Right ventricle myocardium inferior (tissue), 1 donor: ENCODE measurements at regions of chr4 and their contacts with region 1.

Region 1: GRCh38 chr4:74376888-74377483 is 12.0 kb downstream of the EREG start:
- DNase-seq: no peak
- ATAC-seq: peak; percentile 56

Region 2: GRCh38 chr4:74444891-74445642 is 68.1 kb after region 1 on chr4 and contains the start of gene AREG:
- intact Hi-C with region 1: loop called (anchors 2 kb)
- DNase-seq: peak; percentile 92
- ATAC-seq: peak; percentile 87
- total RNA-seq, gene AREG: 1.4 TPM

Region 3: GRCh38 chr4:74531963-74532794 is 155.2 kb after region 1 on chr4:
- intact Hi-C with region 1: loop called (anchors 2 kb)
- DNase-seq: no peak
- ATAC-seq: peak; percentile 54

Region 4: GRCh38 chr4:74623041-74623440 is 246.1 kb after region 1 on chr4:
- intact Hi-C with region 1: loop called (anchors 5 kb)
- DNase-seq: no peak
- ATAC-seq: no peak

Region 5: DNA sequence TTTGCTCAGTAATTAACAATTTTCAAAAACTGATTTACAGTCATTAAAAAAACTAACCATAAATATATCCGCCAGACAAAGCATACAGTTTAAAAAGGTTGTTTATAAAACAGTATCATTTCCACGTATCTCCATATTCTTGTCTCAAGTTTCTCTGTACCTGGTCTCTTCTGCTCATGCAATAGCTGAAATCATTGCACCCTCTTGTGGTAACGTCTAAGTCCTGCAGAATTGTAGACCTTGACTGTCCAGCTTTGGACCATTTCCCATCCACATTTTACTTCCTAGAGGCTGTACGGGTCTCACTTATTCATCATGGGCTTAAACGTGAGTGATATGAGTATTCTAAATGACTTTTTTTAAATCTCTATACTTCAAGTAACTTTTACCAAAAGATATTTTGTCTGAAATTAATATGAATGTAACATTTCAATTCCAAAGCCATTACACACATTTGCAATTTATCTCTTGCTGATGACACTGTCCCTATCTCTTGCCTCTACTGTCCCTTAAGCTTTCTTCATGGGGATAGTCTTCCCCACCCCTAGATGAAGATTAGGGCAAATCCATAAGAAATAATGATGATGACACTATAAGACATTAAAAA is 298.8 kb after region 1 on chr4:
- intact Hi-C with region 1: loop called (anchors 2 kb)
- DNase-seq: no peak
- ATAC-seq: no peak